HepG2 (cell line): ENCODE measurements at regions of chr9 and their contacts with region 1.

Region 1: GRCh38 chr9:81632599-81632998 is 56.7 kb downstream of the TLE1 start:
- DNase-seq: no peak
- ATAC-seq: no peak
- H3K4me3 ChIP-seq: no peak overlapping the region
- H3K27ac ChIP-seq: no peak overlapping the region
- H3K4me1 ChIP-seq: peaks cover 91% of the 10 kb centered on the region
- H3K27me3 ChIP-seq: no peaks in the 10 kb centered on the region
- CTCF ChIP-seq: no peak
- EP300 ChIP-seq: no peak
- POLR2A ChIP-seq: no peak
- RAD21 ChIP-seq: no peak

Region 2: DNA sequence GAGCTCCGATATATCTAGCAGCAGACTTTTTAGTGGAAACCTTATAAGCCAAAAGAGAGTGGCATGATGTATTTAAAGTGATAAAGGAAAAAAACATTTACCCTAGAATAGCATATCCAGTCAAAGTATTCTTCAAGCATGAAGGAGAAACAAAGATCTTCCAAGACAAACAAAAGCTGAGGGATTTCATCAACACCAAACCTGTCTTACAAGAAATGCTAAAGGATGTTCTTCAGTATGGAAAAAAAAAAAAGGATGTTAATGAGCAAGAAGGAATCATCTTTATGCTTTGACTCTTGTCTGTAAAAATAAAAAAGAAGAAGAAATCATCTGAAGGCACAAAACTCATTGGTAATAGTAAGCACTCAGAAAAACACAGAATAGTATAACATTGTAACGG is 281.4 kb before region 1 on chr9:
- CTCF ChIA-PET with region 1: no interaction called
- POLR2A ChIA-PET with region 1: no interaction called
- in situ Hi-C with region 1: no loop called
- intact Hi-C with region 1: no loop called
- DNase-seq: no peak
- ATAC-seq: no peak
- H3K4me3 ChIP-seq: no peak overlapping the region
- H3K27ac ChIP-seq: no peak overlapping the region
- H3K4me1 ChIP-seq: no peaks in the 10 kb centered on the region
- H3K27me3 ChIP-seq: no peaks in the 10 kb centered on the region
- CTCF ChIP-seq: no peak
- EP300 ChIP-seq: no peak
- POLR2A ChIP-seq: no peak
- RAD21 ChIP-seq: no peak

Region 3: GRCh38 chr9:81416451-81417298 is 215.9 kb before region 1 on chr9:
- CTCF ChIA-PET with region 1: no interaction called
- POLR2A ChIA-PET with region 1: no interaction called
- in situ Hi-C with region 1: no loop called
- intact Hi-C with region 1: no loop called
- DNase-seq: no peak
- ATAC-seq: no peak
- H3K4me3 ChIP-seq: no peak overlapping the region
- H3K27ac ChIP-seq: no peak overlapping the region
- H3K4me1 ChIP-seq: no peaks in the 10 kb centered on the region
- H3K27me3 ChIP-seq: no peaks in the 10 kb centered on the region
- CTCF ChIP-seq: no peak
- EP300 ChIP-seq: no peak
- POLR2A ChIP-seq: no peak
- RAD21 ChIP-seq: no peak

Region 4: GRCh38 chr9:81521892-81522291 is 110.7 kb before region 1 on chr9:
- CTCF ChIA-PET with region 1: no interaction called
- POLR2A ChIA-PET with region 1: no interaction called
- in situ Hi-C with region 1: no loop called
- intact Hi-C with region 1: loop called (anchors 1 kb)
- DNase-seq: peak; percentile 57
- ATAC-seq: peak; percentile 52
- H3K4me3 ChIP-seq: no peak overlapping the region
- H3K27ac ChIP-seq: no peak overlapping the region
- H3K4me1 ChIP-seq: peaks cover 45% of the 10 kb centered on the region
- H3K27me3 ChIP-seq: no peaks in the 10 kb centered on the region
- CTCF ChIP-seq: no peak
- EP300 ChIP-seq: no peak
- POLR2A ChIP-seq: no peak
- RAD21 ChIP-seq: no peak

Region 5: GRCh38 chr9:81535542-81536241 is 96.9 kb before region 1 on chr9:
- CTCF ChIA-PET with region 1: no interaction called
- POLR2A ChIA-PET with region 1: interaction called, 4 read pairs
- in situ Hi-C with region 1: no loop called
- intact Hi-C with region 1: loop called (anchors 1 kb)
- DNase-seq: peak; percentile 99
- ATAC-seq: peak; percentile 98
- H3K4me3 ChIP-seq: no peak overlapping the region
- H3K27ac ChIP-seq: peak overlapping the region; percentile 56
- H3K4me1 ChIP-seq: peaks cover 58% of the 10 kb centered on the region
- H3K27me3 ChIP-seq: no peaks in the 10 kb centered on the region
- CTCF ChIP-seq: no peak
- EP300 ChIP-seq: peak; percentile 90 to 99
- POLR2A ChIP-seq: no peak
- RAD21 ChIP-seq: no peak

Region 6: GRCh38 chr9:81588148-81588871 is 44.3 kb before region 1 on chr9:
- CTCF ChIA-PET with region 1: no interaction called
- POLR2A ChIA-PET with region 1: interaction called, 15 read pairs
- in situ Hi-C with region 1: no loop called
- intact Hi-C with region 1: loop called (anchors 1 kb)
- DNase-seq: peak; percentile 99
- ATAC-seq: peak; percentile 96
- H3K4me3 ChIP-seq: peak overlapping the region in 2 of 3 experiments; percentile 11 to 47; a peak in 3 of 6 replicates
- H3K27ac ChIP-seq: peak overlapping the region; percentile 99
- H3K4me1 ChIP-seq: peaks cover 96% of the 10 kb centered on the region
- H3K27me3 ChIP-seq: no peaks in the 10 kb centered on the region
- CTCF ChIP-seq: peak; percentile 52
- EP300 ChIP-seq: peak; percentile 97 to 98
- POLR2A ChIP-seq: peak; percentile 40 to 47; a peak in 1 of 4 replicates
- RAD21 ChIP-seq: peak; percentile 66; the same call in 1 of the 2 replicates

Region 7: DNA sequence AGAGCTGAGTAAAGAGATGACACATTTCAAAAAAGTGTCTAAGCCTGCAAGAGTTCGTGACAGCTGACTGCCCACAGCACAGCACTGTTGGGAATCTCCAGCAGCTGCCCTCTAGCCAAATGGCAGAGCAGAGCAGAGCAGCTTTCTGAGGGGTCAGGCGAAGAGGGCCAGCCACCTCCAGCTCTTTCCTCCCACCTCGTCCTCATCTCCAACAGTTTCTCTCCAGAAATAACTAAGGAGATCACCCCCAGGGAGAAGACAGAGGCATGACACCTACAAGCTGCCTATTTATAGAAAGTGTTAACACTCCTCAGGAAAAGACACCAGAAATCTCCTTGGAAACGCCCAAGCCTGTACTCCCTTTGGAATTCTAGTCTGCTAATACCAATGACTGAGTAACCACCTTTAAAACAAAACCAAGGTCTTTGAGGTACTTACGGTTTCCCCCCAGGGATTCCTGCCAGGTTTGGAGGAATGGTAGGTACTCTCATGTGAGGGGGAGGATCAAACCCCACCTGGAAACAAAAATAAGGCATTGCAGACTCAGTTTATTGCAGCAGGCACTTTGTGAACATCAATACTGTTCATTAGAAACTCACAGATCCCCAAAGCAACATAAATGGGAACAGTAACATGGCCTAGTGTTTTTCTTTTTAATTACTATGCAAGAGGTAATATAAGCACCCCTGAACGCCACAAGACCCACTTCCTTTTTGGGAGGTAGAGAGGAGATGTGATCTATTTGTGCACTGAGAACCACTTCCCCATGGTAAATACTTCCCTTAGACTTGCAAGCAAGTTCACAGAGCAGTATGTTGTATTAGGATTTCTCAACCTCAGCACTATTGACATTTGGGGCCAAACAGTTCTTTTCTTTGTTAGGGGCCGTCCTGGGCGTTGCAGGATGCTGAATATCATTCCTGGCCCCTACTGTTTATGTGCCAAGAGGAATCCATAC is 22.5 kb before region 1 on chr9:
- CTCF ChIA-PET with region 1: no interaction called
- POLR2A ChIA-PET with region 1: no interaction called
- in situ Hi-C with region 1: no loop called
- intact Hi-C with region 1: loop called (anchors 1 kb)
- DNase-seq: peak; percentile 94
- ATAC-seq: peak; percentile 97
- H3K4me3 ChIP-seq: peak overlapping the region in 1 of 3 experiments; percentile 11; a peak in 1 of 6 replicates
- H3K27ac ChIP-seq: peak overlapping the region; percentile 67
- H3K4me1 ChIP-seq: peaks cover 78% of the 10 kb centered on the region
- H3K27me3 ChIP-seq: no peaks in the 10 kb centered on the region
- CTCF ChIP-seq: peak; percentile 11; the same call in 1 of the 2 replicates
- EP300 ChIP-seq: peak in 1 of 2 experiments; percentile 96; a peak in 2 of 4 replicates
- POLR2A ChIP-seq: no peak
- RAD21 ChIP-seq: no peak

Region 8: GRCh38 chr9:81656004-81656403 is 23.4 kb after region 1 on chr9:
- CTCF ChIA-PET with region 1: no interaction called
- POLR2A ChIA-PET with region 1: no interaction called
- in situ Hi-C with region 1: no loop called
- intact Hi-C with region 1: loop called (anchors 1 kb)
- DNase-seq: peak; percentile 21
- ATAC-seq: peak; percentile 72
- H3K4me3 ChIP-seq: no peak overlapping the region; a peak in 1 of 6 replicates
- H3K27ac ChIP-seq: peak overlapping the region; percentile 39
- H3K4me1 ChIP-seq: peaks cover 61% of the 10 kb centered on the region
- H3K27me3 ChIP-seq: no peaks in the 10 kb centered on the region
- CTCF ChIP-seq: no peak
- EP300 ChIP-seq: no peak
- POLR2A ChIP-seq: no peak
- RAD21 ChIP-seq: no peak

Region 9: DNA sequence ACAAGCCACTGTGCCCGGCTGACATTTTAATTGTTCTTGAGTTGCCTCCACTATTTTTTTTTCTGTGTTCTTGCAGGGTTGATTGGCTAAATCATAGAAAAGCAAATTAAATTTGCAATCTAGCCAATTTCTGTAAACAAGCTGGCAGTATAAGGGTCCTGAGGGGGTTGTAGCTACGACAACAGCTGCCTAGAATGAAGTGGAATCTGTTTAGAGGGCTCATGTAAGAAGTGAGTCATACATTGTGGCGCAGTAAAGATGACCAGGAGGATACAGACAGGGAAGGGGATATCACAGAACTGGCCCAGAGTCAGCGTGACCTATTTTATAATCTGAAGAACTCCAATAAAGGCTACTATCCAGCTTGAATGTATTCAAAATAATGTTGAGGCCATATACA is 139.0 kb after region 1 on chr9:
- CTCF ChIA-PET with region 1: no interaction called
- POLR2A ChIA-PET with region 1: no interaction called
- in situ Hi-C with region 1: no loop called
- intact Hi-C with region 1: no loop called
- DNase-seq: no peak
- ATAC-seq: no peak
- H3K4me3 ChIP-seq: no peak overlapping the region
- H3K27ac ChIP-seq: no peak overlapping the region
- H3K4me1 ChIP-seq: no peaks in the 10 kb centered on the region
- H3K27me3 ChIP-seq: no peaks in the 10 kb centered on the region
- CTCF ChIP-seq: no peak
- EP300 ChIP-seq: no peak
- POLR2A ChIP-seq: no peak
- RAD21 ChIP-seq: no peak